Sigmoid colon (tissue), 7 donors: ENCODE measurements at regions of chr1 and their contacts with region 1.

Region 1: DNA sequence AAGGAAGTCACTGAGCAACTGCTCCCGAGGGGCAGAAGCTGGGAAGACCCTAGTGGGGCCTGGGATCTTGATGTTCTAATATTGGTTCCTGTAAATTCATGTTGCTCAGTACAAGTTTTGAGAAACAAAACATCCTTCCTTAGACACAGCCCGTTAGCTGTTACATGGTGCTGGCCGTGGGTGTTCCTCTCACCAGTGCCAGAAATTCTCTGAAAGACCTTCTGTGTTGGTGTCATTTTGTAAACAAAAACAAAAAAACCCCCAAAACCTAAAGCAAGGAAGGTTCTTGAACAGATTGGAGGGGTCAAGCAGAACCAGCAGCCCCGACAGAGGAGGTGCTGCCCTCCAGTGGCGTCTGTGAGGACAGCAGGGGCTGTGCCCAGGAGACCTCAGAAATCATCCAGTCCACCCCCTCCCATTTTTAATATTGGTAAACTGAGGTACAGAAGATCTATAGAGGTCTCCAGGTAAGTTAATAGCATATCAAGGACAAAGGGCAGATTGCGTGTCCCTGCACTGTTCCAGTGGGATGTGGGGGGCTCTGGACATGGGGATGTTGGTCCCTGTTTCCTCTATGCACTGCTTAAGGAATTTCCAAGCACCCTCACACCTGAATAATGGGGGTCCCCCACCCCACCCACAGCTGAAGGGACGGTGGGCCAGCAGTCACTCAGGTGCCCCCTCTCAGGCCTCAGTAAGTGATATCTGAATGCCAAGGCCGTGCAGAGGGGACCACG is 38.2 kb downstream of the SLC2A7 start:
- DNase-seq: peak; percentile 72
- H3K4me3 ChIP-seq: no peak overlapping the region
- H3K27ac ChIP-seq: peak overlapping the region; percentile 3 to 77 (median 36)
- H3K4me1 ChIP-seq: peaks cover 0 to 24% (median 19%) of the 10 kb centered on the region in 4 donors
- H3K27me3 ChIP-seq: no peaks in the 10 kb centered on the region
- CTCF ChIP-seq: peak; percentile 85 to 94 (median 86)
- EP300 ChIP-seq: no peak
- POLR2A ChIP-seq: no peak

Region 2: DNA sequence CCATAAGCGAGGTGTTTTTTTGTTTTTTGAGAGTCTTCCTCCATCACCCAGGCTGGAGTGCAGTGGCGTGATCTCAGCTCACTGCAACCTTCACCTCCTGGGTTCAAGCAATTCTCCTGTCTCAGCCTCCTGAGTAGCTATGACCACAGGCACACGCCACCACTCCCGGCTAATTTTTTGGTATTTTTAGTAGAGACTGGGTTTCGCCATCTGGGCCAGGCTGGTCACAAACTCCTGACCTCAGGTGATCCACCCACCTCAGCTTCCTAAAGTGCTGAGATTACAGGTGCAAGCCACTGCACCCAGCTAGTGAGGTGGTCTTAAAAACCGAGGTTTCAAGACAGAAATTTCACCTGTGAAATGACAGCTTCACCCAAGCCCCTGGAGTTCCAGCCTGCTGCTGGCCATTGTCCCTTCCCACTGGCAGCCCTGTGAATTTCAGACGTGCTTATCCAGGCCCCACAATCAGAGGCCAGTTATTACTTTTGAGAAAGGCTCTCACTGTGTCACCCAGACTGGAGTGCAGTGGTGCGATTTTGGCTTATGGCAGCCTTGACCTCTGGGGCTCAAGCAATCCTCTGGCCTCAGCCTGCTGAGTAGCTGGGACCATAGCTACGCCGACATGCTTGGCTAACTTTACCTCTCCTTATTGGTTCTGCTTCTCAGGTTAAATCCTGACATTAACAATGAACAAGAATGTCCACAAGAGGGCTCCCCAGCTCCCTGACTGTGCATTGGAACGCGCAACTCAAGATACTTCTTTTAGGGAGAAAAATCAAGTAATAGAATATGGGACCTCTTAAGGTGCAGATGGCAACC is 129.0 kb before region 1 on chr1:
- intact Hi-C with region 1: loop called (anchors 5 kb)
- DNase-seq: no peak
- H3K4me3 ChIP-seq: no peak overlapping the region
- H3K27ac ChIP-seq: peak overlapping the region; percentile 41 to 67 (median 54)
- H3K4me1 ChIP-seq: peaks cover 0 to 28% (median 15%) of the 10 kb centered on the region in 4 donors
- H3K27me3 ChIP-seq: no peaks in the 10 kb centered on the region
- CTCF ChIP-seq: peak; percentile 57 to 66 (median 61)
- EP300 ChIP-seq: no peak
- POLR2A ChIP-seq: no peak